GM10248 (cell line): ENCODE measurements at regions of chr17 and their contacts with region 1.

Region 1: GRCh38 chr17:30173649-30174048 is 57.0 kb downstream of the NSRP1 start:
- DNase-seq: peak; percentile 69
- CTCF ChIP-seq: no peak

Region 2: GRCh38 chr17:30161601-30162000 is 12.0 kb before region 1 on chr17:
- CTCF ChIA-PET with region 1: interaction called, 14 read pairs
- POLR2A ChIA-PET with region 1: no interaction called
- DNase-seq: no peak
- CTCF ChIP-seq: no peak

Region 3: DNA sequence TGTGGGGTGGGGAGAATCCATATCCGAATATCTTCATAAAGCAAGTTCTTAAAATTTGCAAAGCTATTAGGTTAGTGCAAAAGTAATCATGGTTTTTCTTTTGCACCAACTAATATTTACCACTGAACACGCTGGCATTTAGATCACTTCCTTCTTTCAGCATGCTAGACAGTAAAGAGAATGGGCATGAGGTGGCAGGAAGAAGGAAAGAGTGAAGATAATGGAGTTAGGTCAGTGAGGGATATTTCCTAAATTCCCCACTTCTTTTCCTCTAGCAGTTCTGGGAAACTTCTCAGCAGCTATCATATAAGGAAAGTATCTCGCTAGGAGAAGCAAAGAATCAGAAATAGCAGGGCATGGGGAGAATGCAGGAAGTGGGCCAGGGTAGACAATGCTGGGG is 22.9 kb after region 1 on chr17:
- CTCF ChIA-PET with region 1: no interaction called
- POLR2A ChIA-PET with region 1: no interaction called
- DNase-seq: no peak
- CTCF ChIP-seq: no peak

Region 4: DNA sequence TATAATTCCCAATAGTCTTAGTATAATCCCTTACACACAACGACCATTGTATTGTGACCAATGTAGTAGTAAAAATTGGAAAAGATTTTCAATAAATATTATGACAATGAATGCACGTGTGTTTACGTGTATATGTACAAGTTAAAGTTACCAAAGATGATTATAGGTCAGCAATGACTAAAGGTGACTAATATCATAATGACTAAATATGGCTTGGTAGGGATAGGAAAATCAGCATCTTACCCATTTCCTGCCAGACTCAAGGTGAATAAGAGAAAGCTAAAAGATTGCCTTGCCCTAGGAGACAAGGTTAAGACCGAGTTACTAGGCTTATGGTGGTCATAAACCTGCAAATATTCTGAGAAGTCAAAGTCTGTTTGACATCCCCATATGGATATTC is 239.5 kb after region 1 on chr17:
- CTCF ChIA-PET with region 1: no interaction called
- POLR2A ChIA-PET with region 1: no interaction called
- DNase-seq: no peak
- CTCF ChIP-seq: no peak